BJ (cell line): ENCODE measurements at regions of chr20 and their contacts with region 1.

Region 1: DNA sequence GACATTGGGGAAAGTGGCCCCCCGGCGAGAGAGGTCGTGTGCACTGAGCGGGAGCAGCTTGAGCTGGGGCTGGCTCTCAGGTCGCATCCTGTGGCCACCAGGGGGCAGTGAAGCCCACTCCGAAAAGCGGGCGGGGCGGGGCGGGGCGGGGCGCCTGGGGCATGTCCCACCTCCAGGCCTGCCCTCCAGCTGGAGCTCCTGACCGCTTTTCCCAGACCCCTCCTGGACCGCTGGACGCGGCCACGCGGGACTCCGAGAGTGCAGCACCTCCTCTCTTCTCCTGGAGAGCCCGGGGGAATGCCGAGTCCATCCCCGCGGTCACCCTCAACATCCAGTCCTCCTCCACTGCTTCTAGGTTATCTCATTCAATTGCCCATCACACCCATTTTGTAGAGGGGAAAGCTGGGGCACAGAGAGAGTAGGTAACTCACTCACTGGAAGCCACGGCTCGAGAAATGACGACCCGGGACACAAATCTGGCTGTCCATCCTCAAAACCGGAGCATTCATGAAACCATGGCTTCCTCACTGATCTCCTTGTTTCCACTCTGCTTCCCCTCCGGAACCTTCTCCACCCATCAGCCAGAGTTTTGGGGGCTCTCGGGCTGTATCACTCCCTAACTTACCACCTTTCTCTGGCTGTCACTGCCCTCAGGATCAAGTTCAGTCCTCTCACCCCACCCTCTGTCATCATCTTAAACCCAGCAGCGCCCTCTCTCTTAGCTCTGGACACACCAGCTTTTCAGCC is 24.1 kb downstream of the COX4I2 start:
- DNase-seq: no peak
- H3K4me3 ChIP-seq: peak overlapping the region; percentile 23
- H3K27me3 ChIP-seq: no peaks in the 10 kb centered on the region
- CTCF ChIP-seq: peak; percentile 86

Region 2: DNA sequence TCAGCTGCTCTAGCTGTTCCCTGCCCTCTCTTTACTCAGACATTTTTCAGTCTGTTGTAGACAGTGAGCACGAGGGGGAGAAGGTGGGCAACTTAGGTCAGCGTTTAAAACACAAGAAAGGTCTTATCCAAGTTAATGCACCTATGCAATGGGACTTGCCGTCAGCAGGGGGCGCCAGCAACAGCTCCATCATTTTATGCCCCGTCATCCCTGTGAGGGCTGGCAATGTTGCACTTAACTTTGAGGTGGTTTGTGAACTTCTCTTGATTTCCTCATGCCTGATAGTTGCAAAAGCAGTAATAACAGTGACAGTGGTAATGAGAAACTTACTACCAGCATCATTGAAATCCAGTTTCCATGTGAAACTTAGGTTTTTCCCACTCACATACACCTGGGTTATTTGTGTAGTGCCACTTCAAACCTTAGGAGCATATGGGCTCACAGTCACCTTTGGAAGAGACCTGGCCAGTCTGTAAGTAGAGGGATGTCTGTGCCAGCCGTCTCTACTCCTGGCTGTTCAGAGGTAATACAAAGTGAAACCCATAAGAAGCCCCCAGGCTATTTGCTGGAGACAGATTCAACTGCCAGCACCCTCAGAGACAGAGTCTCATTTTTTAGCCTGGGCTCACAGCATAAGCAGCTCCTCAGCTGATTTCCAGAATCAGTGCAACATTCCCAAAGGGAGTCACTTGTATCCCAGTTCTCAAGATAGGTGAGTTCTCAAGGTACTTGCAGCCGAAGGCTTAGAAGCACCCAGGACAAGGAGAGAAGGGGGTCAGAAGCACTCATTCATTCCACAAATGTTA is 101.5 kb before region 1 on chr20:
- CTCF ChIA-PET with region 1: interaction called, 11 read pairs
- POLR2A ChIA-PET with region 1: no interaction called
- DNase-seq: peak; percentile 51
- H3K4me3 ChIP-seq: no peak overlapping the region
- H3K27me3 ChIP-seq: no peaks in the 10 kb centered on the region
- CTCF ChIP-seq: peak; percentile 93

Region 3: DNA sequence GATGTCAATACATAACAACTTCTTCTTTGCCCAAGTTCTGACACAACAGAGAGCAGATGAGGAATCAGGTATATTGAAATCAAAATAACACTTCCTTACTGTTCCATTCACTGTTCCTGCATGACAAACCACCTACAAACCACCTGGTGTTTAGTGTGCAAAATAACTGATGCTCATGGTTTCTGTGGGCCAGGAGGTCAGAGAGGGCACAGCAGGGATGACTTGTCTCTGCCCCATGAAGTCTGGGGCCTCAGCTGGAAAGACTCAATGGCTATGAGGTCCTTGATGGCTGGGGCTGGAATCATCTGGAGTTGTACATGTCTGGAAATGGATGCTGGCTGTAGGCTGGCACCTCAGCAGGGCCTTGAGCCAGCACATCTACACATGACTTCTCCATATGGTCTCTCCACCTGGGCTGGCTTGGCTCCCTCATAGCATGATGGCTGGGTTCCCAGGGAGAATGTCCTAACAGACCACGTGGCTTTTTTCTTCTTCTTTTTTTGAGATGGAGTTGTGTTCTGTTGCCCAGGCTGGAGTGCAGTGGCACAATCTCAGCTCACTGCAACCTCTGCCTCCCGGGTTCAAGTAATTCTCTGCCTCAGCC is 31.5 kb before region 1 on chr20:
- CTCF ChIA-PET with region 1: interaction called, 36 read pairs
- POLR2A ChIA-PET with region 1: no interaction called
- DNase-seq: no peak
- H3K4me3 ChIP-seq: no peak overlapping the region
- H3K27me3 ChIP-seq: no peaks in the 10 kb centered on the region
- CTCF ChIP-seq: no peak

Region 4: GRCh38 chr20:31674895-31675827 is 13.4 kb after region 1 on chr20:
- CTCF ChIA-PET with region 1: interaction called, 12 read pairs
- POLR2A ChIA-PET with region 1: interaction called, 5 read pairs
- DNase-seq: no peak
- H3K4me3 ChIP-seq: no peak overlapping the region
- H3K27me3 ChIP-seq: no peaks in the 10 kb centered on the region
- CTCF ChIP-seq: no peak

Region 5: GRCh38 chr20:31698803-31699718 is 37.3 kb after region 1 on chr20:
- CTCF ChIA-PET with region 1: interaction called, 14 read pairs
- POLR2A ChIA-PET with region 1: no interaction called
- DNase-seq: peak; percentile 91
- H3K4me3 ChIP-seq: no peak overlapping the region
- H3K27me3 ChIP-seq: no peaks in the 10 kb centered on the region
- CTCF ChIP-seq: no peak

Region 6: DNA sequence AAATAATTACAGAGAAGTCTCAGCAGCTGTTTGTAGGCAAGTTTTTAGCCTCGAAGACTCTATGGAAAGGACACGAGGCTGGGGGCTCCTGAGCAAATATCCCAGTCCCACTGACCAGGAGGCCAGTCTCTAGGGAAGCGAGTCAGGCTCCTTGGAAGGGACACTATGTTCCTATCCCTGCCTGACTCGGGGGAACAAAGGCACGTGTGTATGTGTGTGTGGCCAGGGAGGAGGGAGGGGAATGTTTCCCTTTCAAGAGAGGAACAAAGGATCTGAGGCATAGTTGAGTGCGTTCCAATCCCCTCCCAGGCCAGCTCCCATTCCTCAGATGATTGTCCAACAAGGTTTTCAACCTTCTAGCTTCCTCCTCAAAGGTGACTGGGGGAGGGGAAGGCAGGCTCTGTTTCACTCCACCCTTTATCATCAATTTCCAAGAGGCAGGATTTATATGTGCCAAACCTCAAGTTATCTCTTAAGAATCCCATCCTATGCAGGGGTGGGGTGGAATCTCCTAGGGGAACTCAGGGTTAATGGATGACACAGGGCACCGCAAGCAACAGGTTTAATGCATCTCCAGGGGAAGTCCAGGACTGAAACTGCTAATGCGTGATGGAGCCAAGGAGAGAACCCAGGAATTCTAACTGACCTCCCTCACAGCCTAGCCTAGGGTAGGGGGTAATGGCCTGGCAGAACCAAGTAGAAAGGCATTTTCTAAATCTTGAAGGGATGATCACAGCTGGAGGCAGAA is 50.9 kb after region 1 on chr20:
- CTCF ChIA-PET with region 1: interaction called, 287 read pairs
- POLR2A ChIA-PET with region 1: no interaction called
- DNase-seq: no peak
- H3K4me3 ChIP-seq: peak overlapping the region; percentile 22
- H3K27me3 ChIP-seq: no peaks in the 10 kb centered on the region
- CTCF ChIP-seq: no peak